Activated CD8-positive, alpha-beta T cell treated with anti-CD3 and anti-CD28 coated beads for 36 hours (primary cell): ENCODE measurements at regions of chr19 and their contacts with region 1.

Region 1: GRCh38 chr19:19776041-19777008 is 43.4 kb upstream of the ZNF14 start:
- DNase-seq: peak; percentile 97
- ATAC-seq: peak; percentile 99
- H3K4me3 Mint-ChIP-seq: peak overlapping the region; percentile 97
- H3K27ac Mint-ChIP-seq: peak overlapping the region; percentile 94
- H3K4me1 Mint-ChIP-seq: peaks cover 48% of the 10 kb centered on the region
- H3K27me3 Mint-ChIP-seq: no peaks in the 10 kb centered on the region
- CTCF ChIP-seq: no peak

Region 2: GRCh38 chr19:19704836-19705235 is 71.5 kb before region 1 on chr19:
- CTCF ChIA-PET with region 1: no interaction called
- POLR2A ChIA-PET with region 1: no interaction called
- intact Hi-C with region 1: no loop called
- DNase-seq: no peak
- ATAC-seq: no peak
- H3K4me3 Mint-ChIP-seq: no peak overlapping the region
- H3K27ac Mint-ChIP-seq: no peak overlapping the region
- H3K4me1 Mint-ChIP-seq: no peaks in the 10 kb centered on the region
- H3K27me3 Mint-ChIP-seq: no peaks in the 10 kb centered on the region
- CTCF ChIP-seq: no peak

Region 3: GRCh38 chr19:19732579-19733501 is 43.5 kb before region 1 on chr19 and contains the start of gene ZNF14:
- CTCF ChIA-PET with region 1: interaction called, 4 read pairs
- POLR2A ChIA-PET with region 1: interaction called, 12 read pairs
- intact Hi-C with region 1: no loop called
- DNase-seq: peak; percentile 97
- ATAC-seq: peak; percentile 100
- H3K4me3 Mint-ChIP-seq: peak within 1 kb of the TSS; percentile 89
- H3K27ac Mint-ChIP-seq: peak within 1 kb of the TSS; percentile 93
- H3K4me1 Mint-ChIP-seq: peaks cover 20% of the 10 kb centered on the region
- H3K27me3 Mint-ChIP-seq: no peaks in the 10 kb centered on the region
- CTCF ChIP-seq: no peak
- total RNA-seq, gene ZNF14: 8.6 to 9.3 TPM